Right ventricle myocardium superior (tissue), 1 donor: ENCODE measurements at regions of chr1 and their contacts with region 1.

Region 1: GRCh38 chr1:91885716-91886506 is at the start of gene TGFBR3:
- DNase-seq: peak; percentile 96
- ATAC-seq: peak; percentile 95
- total RNA-seq, gene TGFBR3: 37.9 TPM

Region 2: DNA sequence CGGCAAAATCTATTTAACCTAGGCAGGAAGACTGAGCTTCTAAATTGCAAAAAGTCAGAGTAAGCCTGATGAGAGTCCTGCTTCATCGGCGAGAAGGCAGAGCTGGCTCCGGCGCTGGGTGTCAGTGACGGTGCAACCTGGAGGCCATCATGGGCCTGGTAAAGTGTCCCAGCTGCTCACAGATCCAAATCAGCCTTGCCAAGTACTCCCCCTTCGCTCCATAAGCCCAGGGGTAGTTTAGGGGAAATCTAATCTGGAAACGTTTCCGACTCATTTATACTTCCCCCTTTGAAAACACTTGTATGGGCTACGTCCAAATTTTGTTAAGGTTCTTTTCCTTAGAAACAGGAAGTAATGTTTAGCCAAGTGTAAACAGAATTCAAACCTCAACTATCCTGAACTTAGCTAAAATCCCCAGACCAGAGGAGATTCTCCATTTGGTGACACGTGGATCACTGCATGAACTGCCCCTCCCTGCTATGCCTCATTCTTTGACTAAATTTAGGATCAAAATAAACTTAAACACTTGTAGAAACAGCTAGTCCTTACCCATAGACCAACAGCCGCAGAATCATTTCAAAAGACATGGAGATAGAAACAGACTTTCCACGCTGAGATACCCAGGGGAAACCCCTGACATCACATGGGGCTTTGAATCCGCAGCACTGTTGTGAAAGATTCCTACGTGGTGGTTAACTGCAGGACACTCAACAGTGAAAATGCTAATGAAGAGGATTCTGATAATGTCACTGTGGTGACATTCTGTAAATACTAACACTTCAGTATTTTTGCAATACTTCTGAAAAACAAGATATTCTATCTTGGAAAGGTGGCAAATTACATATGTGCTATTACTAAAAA is 172.7 kb before region 1 on chr1:
- intact Hi-C with region 1: loop called (anchors 10 kb)
- DNase-seq: peak; percentile 72
- ATAC-seq: peak; percentile 81

Region 3: DNA sequence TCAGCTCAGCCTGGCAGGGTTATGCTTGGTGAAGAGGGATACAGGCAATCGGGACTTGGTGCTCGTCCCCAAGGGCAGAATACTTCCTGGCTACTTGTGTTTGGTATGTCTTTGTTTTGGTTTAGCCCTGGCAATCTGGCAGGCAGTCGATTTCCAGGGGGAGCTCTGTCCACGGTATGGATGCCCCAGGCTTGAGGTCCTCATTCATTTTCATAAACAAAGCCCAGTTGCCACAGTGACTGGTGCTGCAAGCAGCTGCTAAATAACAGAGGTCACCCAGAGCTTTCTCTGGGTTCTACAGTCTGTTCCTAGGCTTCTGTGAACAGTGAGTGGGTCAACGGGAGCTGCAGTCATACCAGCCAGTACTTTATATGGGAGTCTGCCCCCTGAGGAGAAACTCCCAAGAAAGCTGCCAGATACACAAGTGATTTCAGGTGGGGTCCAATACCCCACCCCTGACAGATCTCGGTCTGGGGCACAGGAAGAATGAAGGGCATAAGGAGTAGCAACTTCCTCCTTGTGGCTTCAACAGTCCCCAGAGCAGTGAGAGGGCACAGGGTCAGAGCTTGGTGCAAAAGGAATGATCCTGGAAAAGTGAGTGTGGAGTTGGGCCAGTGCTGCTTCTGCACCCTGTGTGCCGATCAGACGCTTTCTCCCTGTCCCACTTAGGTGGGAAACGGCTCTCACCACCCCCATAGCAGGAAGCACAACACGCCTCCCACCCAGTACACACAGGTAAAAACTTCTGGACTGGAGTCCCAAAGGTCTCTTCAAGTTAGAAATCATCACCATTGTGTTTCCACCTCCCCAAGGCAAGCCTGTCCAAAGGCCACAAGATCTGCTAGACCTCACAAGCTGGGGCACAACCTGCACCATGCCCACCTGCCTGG is 55.4 kb before region 1 on chr1:
- intact Hi-C with region 1: loop called (anchors 10 kb)
- DNase-seq: peak; percentile 86
- ATAC-seq: peak; percentile 76

Region 4: GRCh38 chr1:91846007-91846617 is 39.8 kb before region 1 on chr1:
- intact Hi-C with region 1: no loop called
- DNase-seq: no peak
- ATAC-seq: peak; percentile 77